AG04450 (cell line): ENCODE measurements at regions of chr12 and their contacts with region 1.

Region 1: GRCh38 chr12:120181991-120182631 is 12.4 kb downstream of the GCN1 start:
- DNase-seq: no peak
- H3K4me3 ChIP-seq: no peak overlapping the region
- H3K27ac ChIP-seq: no peak overlapping the region
- H3K27me3 ChIP-seq: no peaks in the 10 kb centered on the region
- CTCF ChIP-seq: no peak

Region 2: GRCh38 chr12:120161852-120162608 is 20.1 kb before region 1 on chr12:
- CTCF ChIA-PET with region 1: no interaction called
- POLR2A ChIA-PET with region 1: interaction called, 10 read pairs
- DNase-seq: no peak
- H3K4me3 ChIP-seq: no peak overlapping the region
- H3K27ac ChIP-seq: no peak overlapping the region
- H3K27me3 ChIP-seq: no peaks in the 10 kb centered on the region
- CTCF ChIP-seq: no peak

Region 3: DNA sequence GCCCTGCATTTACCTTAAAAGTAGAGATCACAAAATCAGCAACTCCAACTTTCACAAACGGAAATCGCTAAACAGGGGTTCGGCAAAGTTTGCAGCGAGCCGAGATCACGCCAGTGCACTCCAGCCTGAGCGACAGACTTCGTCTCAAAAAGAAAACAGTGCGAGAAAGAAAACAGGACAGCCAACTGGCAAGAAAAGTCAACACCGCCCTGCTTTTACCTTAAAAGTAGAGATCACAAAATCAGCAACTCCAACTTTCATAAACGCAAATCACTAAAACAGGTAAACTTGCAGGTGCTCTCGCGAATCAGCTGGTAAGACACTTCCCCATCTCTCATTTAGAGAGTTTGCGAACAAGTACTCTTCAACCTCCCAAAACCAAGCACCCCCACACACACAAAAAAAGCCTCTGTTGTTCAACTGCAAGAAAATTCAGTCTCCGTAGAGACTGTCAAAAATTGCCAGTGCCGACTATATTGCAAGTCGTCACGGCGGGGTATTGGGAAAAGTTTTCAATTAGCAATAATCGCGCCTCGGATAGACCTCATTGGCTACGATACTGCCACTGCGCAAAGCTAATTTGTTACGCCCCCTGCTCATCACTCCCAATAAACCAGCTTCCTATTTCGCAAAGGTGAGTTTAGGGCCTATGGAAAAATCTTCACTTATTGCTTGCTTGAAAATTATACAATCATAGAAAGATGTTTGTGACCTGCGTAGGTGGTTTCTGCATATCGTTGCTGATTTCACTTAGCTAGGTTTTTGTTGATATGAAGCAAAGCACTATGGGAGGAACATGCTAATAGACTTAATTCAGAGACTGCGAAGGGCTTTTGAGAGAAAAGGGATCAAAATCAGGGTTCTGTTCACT is 110.8 kb after region 1 on chr12 and contains the start of gene RNU4-1:
- CTCF ChIA-PET with region 1: no interaction called
- POLR2A ChIA-PET with region 1: no interaction called
- DNase-seq: peak; percentile 95
- H3K4me3 ChIP-seq: peak within 1 kb of the TSS; percentile 62
- H3K27ac ChIP-seq: peak within 1 kb of the TSS; percentile 100
- H3K27me3 ChIP-seq: no peaks in the 10 kb centered on the region
- CTCF ChIP-seq: no peak
- polyA plus RNA-seq, gene RNU4-1: under 0.01 TPM in 1 of 2 replicates, not detected in the other